ENCODE measurements at regions of chr4 and their contacts with region 1.

Region 1: DNA sequence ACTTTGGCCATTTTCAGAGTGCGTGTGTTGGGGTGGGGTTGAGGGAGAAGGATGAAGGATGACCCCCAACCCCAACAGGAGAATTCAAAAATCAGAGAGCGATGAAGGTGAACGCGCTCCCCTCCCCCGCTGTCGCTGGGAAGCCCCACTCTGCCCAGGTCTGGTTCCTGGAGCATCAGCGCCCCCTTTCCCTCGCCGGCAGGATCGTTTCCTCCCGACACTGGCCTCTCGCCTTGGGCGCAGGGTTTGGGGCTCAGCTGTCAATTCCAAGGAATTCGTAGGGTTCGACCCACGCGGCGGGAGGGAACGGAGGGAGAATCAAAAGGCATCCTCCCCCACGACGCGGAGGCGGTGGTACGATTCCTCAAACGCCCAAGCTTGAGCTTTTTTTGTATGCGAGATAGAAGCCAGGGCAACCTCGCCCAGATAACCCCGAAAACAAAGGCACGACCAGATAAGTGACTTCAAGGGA is 1.0 kb upstream of the PDGFRA start:
- DNase-seq: peak in 8 of 10 donors; percentile 51 to 93 (median 58)

Region 2: GRCh38 chr4:52234561-52235440 is 1993.3 kb before region 1 on chr4:
- intact Hi-C with region 1: loop called (anchors 10 kb)
- DNase-seq: no peak

Region 3: GRCh38 chr4:54091637-54092404 is 136.3 kb before region 1 on chr4:
- intact Hi-C with region 1: loop called (anchors 10 kb)
- DNase-seq: peak; percentile 52 to 96 (median 81)

Region 4: GRCh38 chr4:54255876-54256275 is 27.8 kb after region 1 on chr4:
- intact Hi-C with region 1: no loop called
- DNase-seq: no peak

Measured in posterior cingulate gyrus (tissue), 11 donors.